ENCODE measurements at regions of chr6 and their contacts with region 1.

Region 1: DNA sequence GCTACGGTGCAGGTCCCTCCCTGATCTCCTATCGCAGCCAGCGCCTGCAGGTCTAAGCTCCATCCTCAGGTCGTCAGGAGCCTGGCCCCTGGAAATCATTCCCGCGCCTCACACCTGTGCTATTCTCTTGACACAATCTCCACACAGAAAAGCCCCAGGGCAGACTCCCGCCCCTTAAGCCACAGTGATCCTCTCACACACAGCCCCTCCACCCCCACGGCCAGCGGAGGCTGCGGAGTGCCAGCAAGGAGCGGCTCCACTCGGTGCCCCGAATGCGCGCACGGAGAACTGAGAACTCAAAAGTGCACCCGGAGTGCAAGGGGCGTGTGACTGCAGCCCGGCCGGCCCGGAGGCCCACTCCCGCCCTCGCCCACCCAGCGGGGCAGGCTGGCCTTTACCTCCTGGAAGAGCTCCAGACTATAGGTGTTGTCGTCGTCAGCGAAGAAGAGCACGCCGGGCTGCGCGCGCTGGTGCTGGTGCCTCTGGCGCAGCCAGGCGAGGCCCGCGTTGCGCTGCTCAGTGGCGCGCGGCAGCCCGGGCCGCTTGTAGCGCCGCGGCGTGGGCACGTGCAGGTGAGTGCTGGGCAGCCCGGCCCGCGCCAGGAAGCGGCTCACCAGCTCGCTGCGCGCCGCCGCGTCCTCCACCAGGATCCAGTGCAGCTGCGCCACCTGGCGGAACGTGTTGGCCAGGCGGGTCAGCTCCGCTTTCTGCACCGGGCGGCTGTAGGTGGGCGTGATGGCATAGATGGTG is 1.2 kb downstream of the B3GAT2 start:
- DNase-seq: peak; percentile 77
- H3K4me3 Mint-ChIP-seq: peak overlapping the region; percentile 63
- H3K27ac Mint-ChIP-seq: no peak overlapping the region
- H3K4me1 Mint-ChIP-seq: peaks cover 10% of the 10 kb centered on the region
- H3K27me3 Mint-ChIP-seq: peaks cover 73% of the 10 kb centered on the region

Region 2: DNA sequence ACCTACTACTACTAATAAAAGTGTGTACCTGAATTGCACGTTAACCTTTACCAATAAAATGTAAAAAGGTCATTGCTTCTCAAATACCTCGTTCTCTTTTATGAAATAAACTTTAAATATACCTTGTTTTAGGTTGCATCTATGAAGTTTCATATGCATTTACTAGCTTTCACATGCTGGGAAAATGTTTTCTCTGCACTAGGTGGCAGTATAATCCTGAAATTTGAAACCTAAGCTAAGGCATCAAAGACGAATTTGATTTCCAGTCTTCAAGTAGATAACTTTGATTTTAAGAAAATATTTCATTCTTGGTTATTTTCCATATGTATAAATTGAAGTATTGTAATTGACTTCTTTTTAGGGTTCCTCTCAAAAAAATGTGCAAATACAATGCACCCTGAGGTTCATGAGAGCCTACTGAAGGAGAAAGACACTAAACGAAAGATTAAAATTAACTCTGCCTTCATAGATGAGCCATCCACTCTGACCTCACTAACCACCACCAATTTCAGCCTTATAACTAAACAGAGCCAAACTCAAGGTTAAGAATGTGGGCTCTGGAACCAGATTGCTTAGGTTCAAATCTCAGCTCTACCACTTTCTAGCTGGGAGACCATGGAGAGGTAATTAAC is 645.4 kb before region 1 on chr6:
- intact Hi-C with region 1: loop called (anchors 5 kb)
- DNase-seq: no peak
- H3K4me3 Mint-ChIP-seq: no peak overlapping the region
- H3K27ac Mint-ChIP-seq: no peak overlapping the region
- H3K4me1 Mint-ChIP-seq: peaks cover 14% of the 10 kb centered on the region
- H3K27me3 Mint-ChIP-seq: peaks cover 33% of the 10 kb centered on the region

Region 3: DNA sequence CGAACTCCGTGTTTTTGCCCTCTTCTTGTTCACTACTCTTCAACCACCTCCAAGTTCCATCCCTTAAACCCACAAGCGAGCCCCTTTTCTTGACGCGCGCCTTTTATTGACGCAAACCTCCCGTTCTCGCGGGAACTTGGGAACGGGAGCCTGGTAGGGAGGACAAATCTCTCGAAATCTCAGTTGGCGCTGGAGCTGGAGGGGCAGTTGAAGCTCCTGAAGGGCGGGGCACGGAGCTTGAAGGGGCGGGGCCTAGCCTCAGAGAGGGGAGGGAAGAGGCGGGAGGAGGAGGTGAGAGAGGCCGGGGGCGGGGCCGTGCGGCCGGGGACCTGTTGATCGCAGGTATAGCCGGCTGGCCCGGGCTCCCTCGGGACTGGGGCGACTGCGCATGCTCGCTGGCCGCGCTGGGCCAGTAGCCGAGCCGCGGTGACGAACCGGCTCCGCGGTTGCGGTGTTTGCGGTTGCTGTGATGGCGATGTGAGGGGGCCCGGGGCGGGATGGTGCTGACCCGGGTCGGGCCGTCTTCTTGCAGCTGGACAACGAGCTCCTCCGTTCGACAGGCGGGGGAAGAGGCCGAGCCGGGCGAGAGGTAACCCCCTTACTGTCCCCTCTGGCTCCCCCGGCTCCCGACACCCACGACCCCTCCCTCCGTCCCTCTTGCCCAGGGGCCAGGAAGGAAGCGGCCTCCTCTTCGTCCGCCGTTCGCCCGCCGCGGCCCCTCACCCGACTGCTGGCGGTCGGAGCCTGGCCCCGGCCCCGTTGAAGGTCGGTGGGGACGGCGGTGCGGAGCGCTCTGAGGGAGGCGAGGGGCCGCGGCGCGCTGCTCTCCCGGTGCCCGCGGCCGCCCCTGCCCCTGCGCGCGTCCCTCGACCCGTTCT is 542.3 kb before region 1 on chr6 and contains the start of gene FAM135A:
- intact Hi-C with region 1: loop called (anchors 5 kb)
- DNase-seq: peak; percentile 91
- H3K4me3 Mint-ChIP-seq: peak within 1 kb of the TSS; percentile 98
- H3K27ac Mint-ChIP-seq: peak within 1 kb of the TSS; percentile 90
- H3K4me1 Mint-ChIP-seq: peaks cover 25% of the 10 kb centered on the region
- H3K27me3 Mint-ChIP-seq: peaks cover 14% of the 10 kb centered on the region
- total RNA-seq, gene FAM135A: 8.0 and 9.4 TPM in 2 replicates

Region 4: DNA sequence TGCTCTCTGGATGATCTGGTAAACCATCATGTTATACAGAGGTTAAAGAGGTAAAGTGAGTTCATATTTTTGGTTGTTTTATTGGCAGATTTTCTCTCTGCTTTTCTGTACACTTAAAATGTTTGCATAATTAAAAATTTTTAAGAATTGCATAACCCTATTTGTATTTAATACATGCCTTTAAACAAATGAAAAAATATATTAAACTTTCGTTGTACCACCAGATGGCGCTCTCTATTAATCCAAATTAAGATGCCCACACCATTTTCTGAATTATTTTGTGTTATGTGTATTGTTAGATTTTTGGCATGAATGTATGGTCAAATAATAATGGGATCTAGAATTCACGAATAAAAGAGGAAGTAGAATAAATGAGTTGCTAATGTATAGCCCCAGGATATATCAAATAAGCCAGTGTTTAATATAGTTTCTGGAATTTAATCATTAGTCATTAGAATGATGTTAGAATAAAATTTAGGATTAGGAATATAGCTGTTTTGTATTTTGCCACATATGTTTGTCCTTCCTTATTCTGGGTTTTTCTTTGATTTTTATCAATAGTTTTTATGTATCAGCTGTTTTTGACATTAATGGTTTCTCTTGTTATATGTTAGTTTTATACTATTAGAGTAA is 249.0 kb before region 1 on chr6:
- intact Hi-C with region 1: loop called (anchors 2 kb)
- DNase-seq: no peak
- H3K4me3 Mint-ChIP-seq: no peak overlapping the region
- H3K27ac Mint-ChIP-seq: no peak overlapping the region
- H3K4me1 Mint-ChIP-seq: peaks cover 19% of the 10 kb centered on the region
- H3K27me3 Mint-ChIP-seq: no peaks in the 10 kb centered on the region

Region 5: DNA sequence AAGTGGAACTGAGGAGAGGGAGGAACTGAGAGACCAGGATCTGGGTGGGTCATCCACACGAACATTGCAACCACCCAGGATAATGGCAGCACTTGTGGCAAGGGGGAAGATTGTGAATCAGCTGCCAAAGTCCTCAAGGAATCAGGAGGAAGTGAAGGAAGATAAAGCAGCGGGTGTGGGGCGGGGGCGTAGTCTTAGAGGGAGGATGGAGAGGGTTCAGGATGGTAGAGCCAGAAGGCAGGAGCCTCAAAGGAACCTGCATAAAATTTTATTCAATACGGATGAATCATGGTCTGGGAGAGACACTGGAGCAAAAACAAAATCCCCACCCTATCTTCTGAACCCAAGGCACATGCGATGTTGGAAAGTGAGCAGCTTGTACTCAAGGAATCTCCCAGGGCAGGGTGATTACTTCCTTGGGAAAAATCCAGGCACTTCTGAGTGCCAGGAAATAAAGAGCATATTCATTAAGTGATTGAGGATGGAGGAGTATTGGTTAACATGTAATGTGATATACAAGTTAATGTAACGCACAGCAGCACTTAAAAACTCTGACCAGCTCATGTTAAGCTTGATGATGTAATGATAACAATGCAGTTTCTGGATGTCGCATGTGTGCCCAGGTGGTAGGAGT is 83.2 kb after region 1 on chr6:
- intact Hi-C with region 1: no loop called
- DNase-seq: no peak
- H3K4me3 Mint-ChIP-seq: no peak overlapping the region
- H3K27ac Mint-ChIP-seq: no peak overlapping the region
- H3K4me1 Mint-ChIP-seq: no peaks in the 10 kb centered on the region
- H3K27me3 Mint-ChIP-seq: no peaks in the 10 kb centered on the region

Region 6: DNA sequence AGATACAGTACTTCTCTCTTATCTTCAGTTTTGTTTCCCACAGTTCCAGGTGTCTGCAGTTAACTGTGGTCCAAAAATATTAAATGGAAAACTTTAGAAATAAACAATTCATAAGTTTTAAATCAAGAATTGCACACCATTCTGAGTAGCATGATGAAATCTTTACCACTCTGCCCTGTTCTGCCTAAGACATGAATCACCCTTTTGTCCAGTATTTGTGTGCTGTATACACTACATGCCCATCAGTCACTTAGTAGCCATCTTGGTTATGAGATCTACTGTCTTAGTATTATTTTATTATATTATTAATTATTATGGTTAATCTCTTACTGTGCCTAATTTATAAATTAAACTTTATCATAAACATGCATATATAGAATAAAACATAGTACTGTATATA is 611.9 kb after region 1 on chr6:
- intact Hi-C with region 1: no loop called
- DNase-seq: no peak
- H3K4me3 Mint-ChIP-seq: no peak overlapping the region
- H3K27ac Mint-ChIP-seq: no peak overlapping the region
- H3K4me1 Mint-ChIP-seq: no peaks in the 10 kb centered on the region
- H3K27me3 Mint-ChIP-seq: no peaks in the 10 kb centered on the region